Mammary epithelial cell (primary cell): ENCODE measurements at regions of chr13 and their contacts with region 1.

Region 1: GRCh38 chr13:112740502-112741131 is 50.8 kb downstream of the ATP11A start:
- DNase-seq: no peak
- H3K4me3 ChIP-seq: no peak overlapping the region
- H3K27ac ChIP-seq: no peak overlapping the region
- H3K4me1 ChIP-seq: peaks cover 11% of the 10 kb centered on the region
- H3K27me3 ChIP-seq: no peaks in the 10 kb centered on the region
- CTCF ChIP-seq: no peak

Region 2: GRCh38 chr13:112814905-112815585 is 74.4 kb after region 1 on chr13:
- CTCF ChIA-PET with region 1: no interaction called
- dilution Hi-C with region 1: loop called (anchors 5 kb)
- in situ Hi-C with region 1: no loop called
- intact Hi-C with region 1: no loop called
- DNase-seq: no peak
- H3K4me3 ChIP-seq: no peak overlapping the region
- H3K27ac ChIP-seq: no peak overlapping the region
- H3K4me1 ChIP-seq: no peaks in the 10 kb centered on the region
- H3K27me3 ChIP-seq: no peaks in the 10 kb centered on the region
- CTCF ChIP-seq: no peak